A673 (cell line): ENCODE measurements at regions of chr2 and their contacts with region 1.

Region 1: GRCh38 chr2:219642465-219643080 is 15.1 kb downstream of the SLC4A3 start:
- DNase-seq: peak; percentile 96
- H3K4me3 ChIP-seq: no peak overlapping the region
- H3K27ac ChIP-seq: no peak overlapping the region
- H3K4me1 ChIP-seq: peaks cover 9% of the 10 kb centered on the region
- H3K27me3 ChIP-seq: no peaks in the 10 kb centered on the region
- CTCF ChIP-seq: peak; percentile 99

Region 2: GRCh38 chr2:218811382-218811781 is 831.2 kb before region 1 on chr2:
- CTCF ChIA-PET with region 1: no interaction called
- POLR2A ChIA-PET with region 1: no interaction called
- intact Hi-C with region 1: no loop called
- DNase-seq: no peak
- H3K4me3 ChIP-seq: no peak overlapping the region
- H3K27ac ChIP-seq: no peak overlapping the region
- H3K4me1 ChIP-seq: peaks cover 4% of the 10 kb centered on the region
- H3K27me3 ChIP-seq: no peaks in the 10 kb centered on the region
- CTCF ChIP-seq: no peak

Region 3: DNA sequence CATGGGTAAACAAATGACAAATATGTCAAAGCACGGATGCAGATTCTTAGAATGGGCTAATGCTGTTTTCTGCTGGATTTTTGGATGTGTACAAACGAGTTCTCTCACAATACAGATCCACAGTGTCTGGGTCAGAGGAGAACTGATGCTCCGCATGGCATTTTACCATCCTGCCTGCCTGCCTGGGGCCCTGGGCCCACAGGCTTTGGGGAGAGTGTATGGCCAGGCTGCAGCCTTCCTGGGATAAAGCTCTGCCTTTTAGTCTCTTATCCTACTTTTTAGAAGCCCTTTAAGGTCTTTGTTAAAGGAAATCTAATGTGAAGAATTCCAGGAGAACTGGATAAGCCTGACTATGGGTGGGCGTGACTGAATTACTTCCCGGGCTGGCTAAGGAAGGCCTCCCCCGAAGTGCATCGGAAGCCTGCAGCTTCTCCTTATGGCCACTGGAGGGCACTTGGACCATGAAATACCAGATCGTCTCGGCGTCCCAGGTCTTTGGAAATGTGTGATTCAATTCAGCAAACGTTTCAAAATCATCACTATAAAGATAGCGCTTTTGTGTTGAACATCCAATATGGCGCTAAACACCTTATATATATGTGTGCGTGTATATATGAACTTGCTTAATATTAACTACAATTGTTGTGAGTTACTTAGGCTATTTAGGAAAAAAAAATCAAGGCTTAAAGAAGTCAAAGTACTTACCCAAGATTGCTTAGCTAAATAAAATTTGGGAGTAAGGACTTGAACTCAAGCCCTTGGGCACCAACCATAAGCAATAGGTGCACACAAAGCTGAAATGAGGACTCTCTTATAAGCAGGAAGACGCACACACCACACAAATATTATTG is 239.7 kb before region 1 on chr2:
- CTCF ChIA-PET with region 1: no interaction called
- POLR2A ChIA-PET with region 1: no interaction called
- intact Hi-C with region 1: loop called (anchors 5 kb)
- DNase-seq: peak; percentile 88
- H3K4me3 ChIP-seq: no peak overlapping the region
- H3K27ac ChIP-seq: no peak overlapping the region
- H3K4me1 ChIP-seq: peaks cover 6% of the 10 kb centered on the region
- H3K27me3 ChIP-seq: no peaks in the 10 kb centered on the region
- CTCF ChIP-seq: peak; percentile 97

Region 4: DNA sequence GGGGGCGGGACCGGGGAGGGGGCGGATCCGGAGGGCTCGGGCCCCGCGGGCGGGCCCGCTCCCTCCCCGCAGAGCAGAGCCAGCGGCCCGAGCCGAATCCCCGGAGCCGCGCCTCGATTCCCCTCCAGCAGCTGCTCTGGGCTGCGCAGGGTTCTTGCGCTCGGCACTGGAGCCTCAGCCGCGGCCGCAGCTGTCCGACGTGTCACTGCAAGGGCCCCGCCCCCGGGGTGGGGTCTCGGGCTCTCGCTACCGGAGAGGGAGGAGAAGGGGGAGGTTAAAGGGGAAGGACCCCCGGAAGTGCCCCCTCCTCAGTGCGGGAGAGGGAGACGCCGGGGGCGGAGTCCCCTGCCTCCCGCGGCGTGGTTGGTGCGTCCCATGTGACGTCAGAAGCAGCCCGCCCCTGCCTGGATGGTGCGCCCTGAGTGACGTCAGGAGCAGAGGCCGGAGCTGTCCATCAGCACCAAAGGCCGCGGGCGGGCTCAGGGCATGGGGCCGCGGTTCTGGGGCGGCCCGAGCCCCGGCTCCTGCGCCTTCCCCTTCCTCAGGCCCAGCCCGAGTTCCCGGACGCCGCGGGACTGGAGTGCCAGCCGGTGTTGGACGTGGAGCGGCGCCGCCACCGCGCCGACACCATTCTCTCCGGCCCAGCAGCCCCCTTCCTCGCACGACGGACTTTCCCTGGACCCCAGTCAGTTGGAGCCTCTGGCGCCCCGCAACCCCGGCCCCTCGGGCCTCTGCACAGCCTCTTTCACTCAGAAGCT is 98.8 kb before region 1 on chr2 and contains the starts of genes CHPF and TMEM198:
- CTCF ChIA-PET with region 1: interaction called, 3 read pairs
- POLR2A ChIA-PET with region 1: no interaction called
- intact Hi-C with region 1: loop called (anchors 1 kb)
- DNase-seq: peak; percentile 97
- H3K4me3 ChIP-seq: peak within 1 kb of the TSS; percentile 64
- H3K27ac ChIP-seq: peak within 1 kb of the TSS; percentile 73
- H3K4me1 ChIP-seq: peaks cover 11% of the 10 kb centered on the region
- H3K27me3 ChIP-seq: no peaks in the 10 kb centered on the region
- CTCF ChIP-seq: no peak
- total RNA-seq, gene CHPF: 13.8 and 15.8 TPM in 2 replicates
- total RNA-seq, gene TMEM198: 4.6 and 7.6 TPM in 2 replicates

Region 5: DNA sequence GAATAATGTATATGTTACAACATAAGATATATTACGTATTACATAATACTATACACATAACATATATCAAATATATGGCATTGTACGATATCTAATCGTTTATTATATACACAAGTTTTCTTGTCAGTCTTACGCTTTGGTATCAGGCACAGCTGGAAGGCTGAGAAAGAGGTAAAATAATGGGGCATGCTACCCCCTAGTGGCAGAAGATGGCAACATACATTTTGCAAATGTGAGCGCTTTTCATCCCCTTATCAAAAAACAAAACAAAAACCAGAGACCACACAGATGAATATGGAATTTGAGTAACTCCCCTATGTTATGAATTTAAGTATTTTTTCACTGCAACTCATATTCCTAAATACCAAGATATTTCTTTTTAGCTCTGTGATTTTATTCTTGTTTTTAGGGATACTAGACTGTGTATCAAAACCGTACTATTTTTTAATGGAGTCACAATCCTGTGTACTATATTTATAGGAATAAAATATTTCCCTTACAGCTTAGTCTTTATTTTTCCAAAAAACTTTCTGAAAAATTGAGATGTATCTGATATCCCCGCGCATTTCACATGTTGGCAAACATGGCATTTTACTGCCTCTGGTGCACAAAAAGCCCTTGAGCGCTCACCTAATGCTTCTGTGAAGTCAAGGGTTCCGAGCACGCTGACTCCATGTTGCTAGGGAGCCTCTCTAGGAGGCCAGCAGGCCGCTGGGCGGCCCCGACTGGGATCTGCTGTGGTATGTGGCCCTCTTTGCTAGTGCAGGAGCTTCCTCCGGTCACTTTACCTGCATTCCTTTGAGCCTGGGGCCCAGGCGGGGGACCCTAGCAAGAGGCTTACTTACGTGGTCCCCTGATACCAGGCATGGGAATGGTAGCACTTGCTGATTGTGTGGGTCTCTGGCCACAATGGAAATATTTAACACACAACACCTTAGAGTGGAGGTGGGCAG is 47.4 kb after region 1 on chr2:
- CTCF ChIA-PET with region 1: no interaction called
- POLR2A ChIA-PET with region 1: no interaction called
- intact Hi-C with region 1: loop called (anchors 2 kb)
- DNase-seq: peak; percentile 72
- H3K4me3 ChIP-seq: no peak overlapping the region
- H3K27ac ChIP-seq: no peak overlapping the region
- H3K4me1 ChIP-seq: peaks cover 6% of the 10 kb centered on the region
- H3K27me3 ChIP-seq: no peaks in the 10 kb centered on the region
- CTCF ChIP-seq: peak; percentile 75